Naive thymus-derived CD4-positive, alpha-beta T cell (primary cell): ENCODE measurements at regions of chr7 and their contacts with region 1.

Region 1: GRCh38 chr7:32891800-32892520 is 400 bp upstream of the KBTBD2 start:
- DNase-seq: peak; percentile 91 to 98 (median 96)
- ATAC-seq: peak; percentile 81
- H3K4me3 ChIP-seq: peak overlapping the region; percentile 87
- H3K4me3 Mint-ChIP-seq: peak overlapping the region; percentile 89 to 97 (median 95)
- H3K27ac ChIP-seq: peak overlapping the region; percentile 97
- H3K27ac Mint-ChIP-seq: peak overlapping the region; percentile 97 to 100 (median 99)
- H3K4me1 ChIP-seq: peaks cover 23 to 32% of the 10 kb centered on the region in 2 donors
- H3K4me1 Mint-ChIP-seq: peaks cover 27 to 59% (median 47%) of the 10 kb centered on the region in 7 donors
- H3K27me3 ChIP-seq: no peaks in the 10 kb centered on the region
- H3K27me3 Mint-ChIP-seq: peaks cover 0 to 2% (median 0%) of the 10 kb centered on the region in 5 donors

Region 2: DNA sequence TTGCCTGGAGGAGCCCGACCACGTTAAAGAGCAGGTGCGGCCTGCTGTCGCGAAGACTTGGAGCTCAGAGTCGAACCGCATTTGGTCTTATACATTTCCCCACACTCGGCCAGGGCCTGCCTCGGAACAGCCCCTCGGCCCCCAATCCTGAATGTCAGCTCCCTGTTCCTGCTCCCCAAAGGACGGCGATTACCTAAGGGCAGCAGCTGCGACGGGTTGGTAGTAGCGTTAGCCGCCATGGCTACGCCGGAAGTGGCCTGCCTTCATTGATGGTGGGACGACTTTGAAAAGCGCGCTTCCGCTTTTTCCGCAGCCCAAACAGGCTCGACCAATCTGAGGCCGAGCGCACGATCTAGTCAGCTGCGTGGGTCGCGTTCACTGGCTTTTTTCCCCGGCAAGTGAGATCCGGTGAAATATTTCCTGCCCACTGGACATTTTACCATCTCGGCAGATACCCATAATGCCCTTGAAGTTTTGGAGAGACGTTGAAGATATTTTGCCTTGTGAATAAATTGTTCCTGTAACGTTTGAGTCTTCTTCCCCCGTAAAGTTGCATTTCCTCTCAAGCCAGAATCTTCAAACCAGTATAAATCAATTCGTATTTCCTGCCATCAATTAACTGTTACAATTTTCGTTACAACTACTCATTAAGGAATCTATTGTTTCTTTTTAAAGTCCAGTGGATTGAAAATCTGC is 401.7 kb before region 1 on chr7 and contains the start of gene LSM5:
- CTCF ChIA-PET with region 1: interaction called, 5 read pairs
- POLR2A ChIA-PET with region 1: interaction called, 7 read pairs
- intact Hi-C with region 1: loop called (anchors 1 kb)
- DNase-seq: peak; percentile 77 to 91 (median 89)
- ATAC-seq: peak; percentile 84
- H3K4me3 ChIP-seq: peak within 1 kb of the TSS; percentile 86
- H3K4me3 Mint-ChIP-seq: peak within 1 kb of the TSS; percentile 83 to 98 (median 92)
- H3K27ac ChIP-seq: peak within 1 kb of the TSS; percentile 87
- H3K27ac Mint-ChIP-seq: peak within 1 kb of the TSS; percentile 90 to 98 (median 96)
- H3K4me1 ChIP-seq: peaks cover 8 to 13% of the 10 kb centered on the region in 2 donors
- H3K4me1 Mint-ChIP-seq: peaks cover 12 to 43% (median 31%) of the 10 kb centered on the region in 7 donors
- H3K27me3 ChIP-seq: no peaks in the 10 kb centered on the region
- H3K27me3 Mint-ChIP-seq: no peaks in the 10 kb centered on the region
- total RNA-seq, gene LSM5: 21.5 to 58.8 (median 39.4) TPM

Region 3: DNA sequence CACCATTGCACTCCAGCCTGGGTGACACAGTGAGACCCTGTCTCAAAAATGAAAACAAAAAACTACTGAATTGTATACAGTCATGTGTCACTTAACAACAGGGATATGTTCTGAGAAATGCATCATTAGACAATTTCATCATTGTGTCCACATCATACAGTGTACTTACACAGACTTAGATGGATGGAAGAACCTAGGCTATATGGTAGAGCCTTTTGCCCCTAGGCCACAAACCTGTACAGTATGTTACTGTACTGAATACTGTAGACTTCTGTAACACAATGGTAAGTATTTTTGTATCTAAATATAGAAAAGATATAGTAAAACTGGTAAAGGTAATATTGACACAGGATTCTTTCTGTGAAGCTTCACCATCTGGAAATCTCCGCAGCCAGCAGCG is 82.1 kb before region 1 on chr7:
- CTCF ChIA-PET with region 1: no interaction called
- POLR2A ChIA-PET with region 1: no interaction called
- intact Hi-C with region 1: no loop called
- DNase-seq: no peak
- ATAC-seq: no peak
- H3K4me3 ChIP-seq: no peak overlapping the region
- H3K4me3 Mint-ChIP-seq: peak overlapping the region in 1 of 10 donors; percentile 58
- H3K27ac ChIP-seq: no peak overlapping the region
- H3K27ac Mint-ChIP-seq: no peak overlapping the region
- H3K4me1 ChIP-seq: no peaks in the 10 kb centered on the region
- H3K4me1 Mint-ChIP-seq: no peaks in the 10 kb centered on the region
- H3K27me3 ChIP-seq: no peaks in the 10 kb centered on the region
- H3K27me3 Mint-ChIP-seq: peaks cover 0 to 13% (median 0%) of the 10 kb centered on the region in 5 donors

Region 4: DNA sequence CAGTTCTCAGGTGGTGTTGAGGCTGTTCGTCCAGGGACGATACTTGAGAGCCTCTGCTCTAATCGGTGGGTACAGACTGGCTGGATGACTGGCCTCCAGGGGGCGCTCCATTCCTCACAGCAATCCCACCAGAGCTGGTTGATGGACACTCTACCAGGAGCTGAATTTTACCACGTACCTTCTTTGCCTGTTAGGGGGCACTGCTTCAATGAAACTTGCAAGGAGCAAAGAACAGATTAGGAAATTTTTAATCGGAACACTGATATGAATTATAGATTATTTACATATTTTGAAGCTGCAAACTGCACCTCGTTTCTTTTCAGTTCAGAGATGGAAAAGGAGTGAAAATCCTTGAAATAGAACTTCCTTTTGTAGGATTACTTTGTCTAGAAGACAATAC is 45.3 kb before region 1 on chr7:
- CTCF ChIA-PET with region 1: interaction called, 16 read pairs
- POLR2A ChIA-PET with region 1: interaction called, 13 read pairs
- intact Hi-C with region 1: loop called (anchors 1 to 5 kb)
- DNase-seq: peak; percentile 77 to 89 (median 86)
- ATAC-seq: peak; percentile 100
- H3K4me3 ChIP-seq: no peak overlapping the region
- H3K4me3 Mint-ChIP-seq: peak overlapping the region in 6 of 10 donors; percentile 15 to 42 (median 30)
- H3K27ac ChIP-seq: no peak overlapping the region
- H3K27ac Mint-ChIP-seq: peak overlapping the region in 1 of 9 donors; percentile 33
- H3K4me1 ChIP-seq: peaks cover 7% of the 10 kb centered on the region in 2 donors
- H3K4me1 Mint-ChIP-seq: peaks cover 6 to 10% (median 9%) of the 10 kb centered on the region in 7 donors
- H3K27me3 ChIP-seq: peaks cover 0 to under 1% of the 10 kb centered on the region in 2 donors
- H3K27me3 Mint-ChIP-seq: peaks cover 12 to 44% (median 23%) of the 10 kb centered on the region in 5 donors

Region 5: DNA sequence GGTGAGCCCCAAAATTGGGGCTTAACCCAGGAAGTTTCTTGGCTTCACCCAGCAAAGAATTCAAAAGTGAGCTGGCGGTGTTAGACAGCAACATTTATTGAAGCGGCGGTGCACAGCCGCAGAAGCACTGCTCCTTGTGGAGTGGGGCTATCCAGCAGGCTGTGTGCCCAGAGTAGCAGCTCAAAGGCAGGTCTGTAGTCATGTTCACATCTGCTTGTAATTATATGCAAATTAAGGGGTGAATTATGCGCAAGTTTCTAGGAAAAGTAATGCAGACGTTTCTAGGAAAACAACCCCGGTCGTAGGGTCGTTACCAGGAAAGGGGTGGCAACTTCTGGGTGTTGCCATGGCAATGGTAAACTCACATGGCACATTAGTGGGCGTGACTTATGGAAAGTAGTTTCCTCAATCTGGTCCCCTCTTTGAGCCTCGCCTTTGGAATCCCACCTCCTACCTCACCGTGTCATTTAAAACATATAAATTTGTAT is 13.3 kb after region 1 on chr7:
- CTCF ChIA-PET with region 1: interaction called, 9 read pairs
- POLR2A ChIA-PET with region 1: interaction called, 78 read pairs
- intact Hi-C with region 1: loop called (anchors 1 kb)
- DNase-seq: peak; percentile 37 to 88 (median 82)
- ATAC-seq: peak; percentile 92
- H3K4me3 ChIP-seq: peak overlapping the region; percentile 63
- H3K4me3 Mint-ChIP-seq: peak overlapping the region; percentile 73 to 89 (median 85)
- H3K27ac ChIP-seq: peak overlapping the region; percentile 84
- H3K27ac Mint-ChIP-seq: peak overlapping the region; percentile 86 to 96 (median 94)
- H3K4me1 ChIP-seq: peaks cover 6 to 16% of the 10 kb centered on the region in 2 donors
- H3K4me1 Mint-ChIP-seq: peaks cover 4 to 27% (median 24%) of the 10 kb centered on the region in 7 donors
- H3K27me3 ChIP-seq: no peaks in the 10 kb centered on the region
- H3K27me3 Mint-ChIP-seq: no peaks in the 10 kb centered on the region

Region 6: GRCh38 chr7:33040803-33041516 is 149.0 kb after region 1 on chr7:
- CTCF ChIA-PET with region 1: no interaction called
- POLR2A ChIA-PET with region 1: interaction called, 18 read pairs
- intact Hi-C with region 1: loop called in 1 of 2 experiments (anchors 1 kb)
- DNase-seq: peak in 8 of 9 donors; percentile 44 to 90 (median 78)
- ATAC-seq: peak; percentile 99
- H3K4me3 ChIP-seq: peak overlapping the region; percentile 40
- H3K4me3 Mint-ChIP-seq: peak overlapping the region; percentile 71 to 89 (median 84)
- H3K27ac ChIP-seq: peak overlapping the region; percentile 80
- H3K27ac Mint-ChIP-seq: peak overlapping the region; percentile 75 to 95 (median 90)
- H3K4me1 ChIP-seq: peaks cover 3 to 22% of the 10 kb centered on the region in 2 donors
- H3K4me1 Mint-ChIP-seq: peaks cover 18 to 72% (median 65%) of the 10 kb centered on the region in 7 donors
- H3K27me3 ChIP-seq: no peaks in the 10 kb centered on the region
- H3K27me3 Mint-ChIP-seq: no peaks in the 10 kb centered on the region

Region 7: GRCh38 chr7:33062782-33063443 is 171.0 kb after region 1 on chr7:
- CTCF ChIA-PET with region 1: no interaction called
- POLR2A ChIA-PET with region 1: interaction called, 20 read pairs
- intact Hi-C with region 1: loop called (anchors 1 kb)
- DNase-seq: peak; percentile 90 to 95 (median 93)
- ATAC-seq: peak; percentile 97
- H3K4me3 ChIP-seq: peak overlapping the region; percentile 96
- H3K4me3 Mint-ChIP-seq: peak overlapping the region; percentile 91 to 98 (median 96)
- H3K27ac ChIP-seq: peak overlapping the region; percentile 82
- H3K27ac Mint-ChIP-seq: peak overlapping the region; percentile 92 to 99 (median 96)
- H3K4me1 ChIP-seq: peaks cover 23 to 32% of the 10 kb centered on the region in 2 donors
- H3K4me1 Mint-ChIP-seq: peaks cover 20 to 50% (median 39%) of the 10 kb centered on the region in 7 donors
- H3K27me3 ChIP-seq: no peaks in the 10 kb centered on the region
- H3K27me3 Mint-ChIP-seq: peaks cover 0 to 14% (median 0%) of the 10 kb centered on the region in 5 donors